ENCODE measurements at regions of chr14 and their contacts with region 1.

Region 1: DNA sequence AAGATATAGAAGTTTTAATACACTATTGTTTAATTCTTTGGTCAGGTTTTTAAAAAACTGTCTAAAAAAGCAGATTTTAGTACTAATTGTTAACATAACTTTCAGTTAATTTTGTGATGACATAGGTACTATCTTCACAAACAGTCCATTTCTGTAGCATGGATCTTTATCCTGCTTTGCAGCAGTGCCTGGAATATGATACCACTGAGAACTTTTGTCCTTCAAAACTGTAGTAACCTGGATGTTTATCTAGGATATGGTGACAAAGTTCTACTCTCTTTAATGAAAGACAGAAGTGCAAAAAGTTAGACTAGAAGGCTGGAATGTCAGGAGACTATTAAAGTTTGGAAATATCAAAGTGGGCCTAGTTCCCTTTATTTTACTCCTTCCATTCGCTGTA is 159.9 kb downstream of the SYNE2 start:
- DNase-seq: no peak
- H3K4me3 ChIP-seq: no peak overlapping the region
- H3K27ac ChIP-seq: no peak overlapping the region
- H3K4me1 ChIP-seq: no peaks in the 10 kb centered on the region
- H3K27me3 ChIP-seq: no peaks in the 10 kb centered on the region
- CTCF ChIP-seq: no peak

Region 2: DNA sequence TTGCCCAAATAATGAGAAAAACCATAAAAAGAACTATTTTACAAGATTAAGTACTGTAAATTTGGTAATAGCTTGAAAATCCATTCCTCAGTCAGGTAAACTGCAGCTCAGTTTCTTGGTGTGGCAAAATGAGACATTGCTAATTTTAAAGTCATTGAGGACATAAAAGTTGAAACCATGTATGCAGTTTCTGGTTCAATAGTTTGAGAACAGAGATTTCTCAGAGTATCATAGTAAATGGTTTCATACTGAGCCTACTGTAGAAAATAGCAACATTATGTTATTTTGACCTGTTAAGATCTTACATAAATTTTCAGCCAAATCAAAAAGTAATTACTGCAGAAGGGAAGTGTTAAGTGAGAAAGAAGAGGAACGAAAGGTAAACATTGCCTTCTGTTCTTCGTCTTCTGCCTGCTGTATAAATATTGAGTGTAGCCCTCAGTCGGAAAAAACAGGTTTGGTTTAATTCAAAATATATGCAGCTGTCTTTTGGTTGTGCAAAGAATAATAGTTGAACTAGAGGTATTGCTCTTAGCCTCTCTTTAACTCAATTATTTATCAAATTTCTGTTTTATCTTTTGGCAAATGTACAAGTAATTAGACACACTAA is 40.3 kb before region 1 on chr14:
- CTCF ChIA-PET with region 1: no interaction called
- dilution Hi-C with region 1: loop called (anchors 5 kb)
- in situ Hi-C with region 1: no loop called
- intact Hi-C with region 1: no loop called
- DNase-seq: no peak
- H3K4me3 ChIP-seq: no peak overlapping the region
- H3K27ac ChIP-seq: no peak overlapping the region
- H3K4me1 ChIP-seq: no peaks in the 10 kb centered on the region
- H3K27me3 ChIP-seq: no peaks in the 10 kb centered on the region
- CTCF ChIP-seq: no peak